Transverse colon (tissue), 4 donors: ENCODE measurements at regions of chr5 and their contacts with region 1.

Region 1: DNA sequence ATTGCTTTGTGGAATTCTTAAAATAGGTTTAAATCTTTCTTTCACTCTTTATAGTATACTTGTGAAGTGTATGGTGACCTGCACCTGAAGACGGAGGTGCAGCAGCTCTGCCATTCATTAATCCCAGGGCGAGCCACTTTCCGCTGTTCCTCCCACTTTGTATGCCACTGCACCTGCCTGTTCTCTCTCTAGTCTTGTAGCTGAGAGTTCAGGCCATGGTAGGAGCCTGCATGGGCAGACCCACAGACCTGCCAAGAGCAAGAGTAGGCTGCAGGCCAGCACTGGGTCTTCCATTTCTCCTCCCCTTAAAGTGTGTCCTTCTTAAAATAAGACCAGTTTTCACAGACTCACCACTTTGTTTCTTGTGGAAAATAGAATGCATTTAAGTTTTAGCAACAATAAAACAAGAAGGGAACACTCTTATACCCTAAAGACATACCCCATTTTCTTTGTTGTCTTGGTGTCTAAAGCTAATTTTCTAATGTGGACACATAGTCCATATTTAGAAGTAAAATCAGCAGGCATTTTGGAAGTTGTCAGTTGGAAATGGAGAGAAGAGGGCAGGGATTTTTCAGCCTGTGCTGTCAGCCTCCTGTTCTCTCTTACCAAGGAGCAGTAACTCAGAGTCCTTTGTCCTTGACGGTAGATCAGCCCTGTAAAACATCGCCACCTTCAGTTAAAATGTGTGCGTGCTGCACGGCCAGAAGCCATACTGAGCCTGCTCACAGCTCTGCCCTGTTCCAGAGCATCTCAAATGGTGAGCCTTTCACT is 103.2 kb downstream of the SNCAIP start:
- DNase-seq: peak; percentile 53
- H3K4me3 ChIP-seq: no peak overlapping the region
- H3K27ac ChIP-seq: no peak overlapping the region
- H3K4me1 ChIP-seq: peaks cover 0 to 6% (median 0%) of the 10 kb centered on the region in 4 donors
- H3K27me3 ChIP-seq: no peaks in the 10 kb centered on the region
- CTCF ChIP-seq: peak; percentile 52 to 68 (median 62)
- EP300 ChIP-seq: no peak
- POLR2A ChIP-seq: no peak

Region 2: GRCh38 chr5:122091936-122092600 is 323.1 kb before region 1 on chr5:
- in situ Hi-C with region 1: loop called in 1 of 4 experiments (anchors 10 kb)
- intact Hi-C with region 1: no loop called
- DNase-seq: no peak
- H3K4me3 ChIP-seq: no peak overlapping the region
- H3K27ac ChIP-seq: no peak overlapping the region
- H3K4me1 ChIP-seq: no peaks in the 10 kb centered on the region
- H3K27me3 ChIP-seq: no peaks in the 10 kb centered on the region
- CTCF ChIP-seq: peak; percentile 41 to 57 (median 49)
- EP300 ChIP-seq: no peak
- POLR2A ChIP-seq: no peak

Region 3: GRCh38 chr5:122192497-122193496 is 222.4 kb before region 1 on chr5:
- in situ Hi-C with region 1: loop called (anchors 10 kb)
- intact Hi-C with region 1: loop called (anchors 1 kb)
- DNase-seq: no peak
- H3K4me3 ChIP-seq: no peak overlapping the region
- H3K27ac ChIP-seq: no peak overlapping the region
- H3K4me1 ChIP-seq: peaks cover 0 to 12% (median 5%) of the 10 kb centered on the region in 4 donors
- H3K27me3 ChIP-seq: no peaks in the 10 kb centered on the region
- CTCF ChIP-seq: peak; percentile 59 to 70 (median 64)
- EP300 ChIP-seq: no peak
- POLR2A ChIP-seq: no peak